K562 (cell line): ENCODE measurements at regions of chr4 and their contacts with region 1.

Region 1: GRCh38 chr4:6942238-6942800 is 32.7 kb downstream of the TBC1D14 start:
- DNase-seq: peak; percentile 56 to 78 (median 65)
- ATAC-seq: peak; percentile 91
- H3K4me3 ChIP-seq: 0 out of 2 replicates have a peak overlapping the region, but pooled peaks have one; percentile 5
- H3K27ac ChIP-seq: peak overlapping the region; percentile 73
- H3K4me1 ChIP-seq: peaks cover 36 to 54% of the 10 kb centered on the region in 2 experiments
- H3K27me3 ChIP-seq: no peaks in the 10 kb centered on the region
- CTCF ChIP-seq: no peak
- EP300 ChIP-seq: peak; percentile 74
- POLR2A ChIP-seq: no peak
- RAD21 ChIP-seq: 0 out of 4 replicates have a peak, but pooled peaks of 1 of the 2 experiments have one; percentile 3

Region 2: GRCh38 chr4:6917461-6918271 is 24.7 kb before region 1 on chr4:
- CTCF ChIA-PET with region 1: no interaction called
- POLR2A ChIA-PET with region 1: interaction called, 3 read pairs
- in situ Hi-C with region 1: no loop called
- intact Hi-C with region 1: loop called (anchors 2 kb)
- DNase-seq: peak; percentile 63 to 92 (median 70)
- ATAC-seq: peak; percentile 81
- H3K4me3 ChIP-seq: peak overlapping the region; percentile 15; the same call in 1 of the 2 replicates
- H3K27ac ChIP-seq: peak overlapping the region; percentile 97
- H3K4me1 ChIP-seq: peaks cover 58 to 60% of the 10 kb centered on the region in 2 experiments
- H3K27me3 ChIP-seq: no peaks in the 10 kb centered on the region; a peak in 1 of 5 replicates
- CTCF ChIP-seq: peak; percentile 64 to 82 (median 69)
- EP300 ChIP-seq: 0 out of 2 replicates have a peak, but pooled peaks have one; percentile 58
- POLR2A ChIP-seq: no peak
- RAD21 ChIP-seq: no peak; a peak in 1 of 4 replicates

Region 3: DNA sequence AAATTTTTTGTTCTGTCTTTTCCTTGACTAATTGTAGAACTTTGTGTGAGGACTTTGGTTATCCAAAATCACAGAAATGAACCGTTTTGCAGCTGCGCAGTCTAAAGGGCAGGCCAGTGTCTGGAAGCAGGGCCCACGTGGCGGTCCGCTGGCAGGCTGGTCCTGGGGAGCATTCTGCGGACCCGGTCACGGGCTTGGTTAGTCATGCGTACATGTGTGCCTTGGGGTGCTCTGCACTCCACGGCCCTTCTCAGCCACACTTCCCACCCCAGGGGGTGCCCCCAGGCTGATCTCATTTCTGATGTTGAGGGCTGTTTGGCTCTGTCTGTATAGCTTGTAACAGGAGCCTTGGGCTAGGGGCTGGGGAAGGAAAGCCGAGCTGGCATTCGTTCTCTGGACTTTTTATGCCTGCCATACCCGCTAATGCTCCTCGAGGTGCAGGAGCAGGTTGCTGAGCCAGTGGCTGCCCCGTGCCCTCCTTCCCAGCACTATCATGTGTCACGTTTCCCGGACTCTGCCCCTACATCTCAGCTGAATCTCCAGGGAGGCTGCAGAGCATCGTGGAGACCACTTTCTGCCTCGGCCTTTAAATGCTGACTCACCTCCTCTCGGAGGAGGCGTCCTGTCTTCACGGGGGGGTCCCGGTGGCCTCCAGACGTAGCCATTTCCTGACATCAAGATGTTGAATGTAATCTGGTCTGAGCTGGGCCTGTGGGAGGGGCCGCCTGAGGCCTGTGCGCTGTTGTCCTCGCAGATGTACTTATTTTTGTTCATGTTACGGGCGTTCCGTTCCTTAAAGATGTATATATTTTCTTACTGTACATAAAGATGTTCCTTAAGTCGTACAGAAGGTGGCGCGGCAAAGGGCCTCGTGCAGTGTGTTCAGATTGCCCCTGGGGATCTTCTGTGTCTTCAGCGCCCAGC is 89.5 kb after region 1 on chr4:
- CTCF ChIA-PET with region 1: no interaction called
- POLR2A ChIA-PET with region 1: no interaction called
- in situ Hi-C with region 1: no loop called
- intact Hi-C with region 1: no loop called
- DNase-seq: peak; percentile 87 to 93 (median 90)
- ATAC-seq: peak; percentile 94
- H3K4me3 ChIP-seq: no peak overlapping the region
- H3K27ac ChIP-seq: peak overlapping the region; percentile 80
- H3K4me1 ChIP-seq: peaks cover 14 to 35% of the 10 kb centered on the region in 2 experiments
- H3K27me3 ChIP-seq: no peaks in the 10 kb centered on the region
- CTCF ChIP-seq: peak; percentile 42 to 55 (median 50)
- EP300 ChIP-seq: peak; percentile 73; the same call in 1 of the 2 replicates
- POLR2A ChIP-seq: 0 out of 2 replicates have a peak, but pooled peaks have one; percentile 39
- RAD21 ChIP-seq: peak; percentile 7 to 32; a peak in 2 of 4 replicates

Region 4: GRCh38 chr4:7186061-7186461 is 243.7 kb after region 1 on chr4:
- CTCF ChIA-PET with region 1: no interaction called
- POLR2A ChIA-PET with region 1: no interaction called
- in situ Hi-C with region 1: no loop called
- intact Hi-C with region 1: no loop called
- DNase-seq: peak; percentile 17 to 60 (median 50)
- ATAC-seq: peak; percentile 81
- H3K4me3 ChIP-seq: no peak overlapping the region
- H3K27ac ChIP-seq: no peak overlapping the region
- H3K4me1 ChIP-seq: no peaks in the 10 kb centered on the region
- H3K27me3 ChIP-seq: peaks cover 21 to 43% of the 10 kb centered on the region in 2 experiments; a peak in 4 of 5 replicates
- CTCF ChIP-seq: peak; percentile 27 to 54 (median 46); a peak in 4 of 6 replicates
- EP300 ChIP-seq: no peak
- POLR2A ChIP-seq: no peak
- RAD21 ChIP-seq: peak in 1 of 2 experiments; percentile 43; a peak in 2 of 4 replicates

Region 5: DNA sequence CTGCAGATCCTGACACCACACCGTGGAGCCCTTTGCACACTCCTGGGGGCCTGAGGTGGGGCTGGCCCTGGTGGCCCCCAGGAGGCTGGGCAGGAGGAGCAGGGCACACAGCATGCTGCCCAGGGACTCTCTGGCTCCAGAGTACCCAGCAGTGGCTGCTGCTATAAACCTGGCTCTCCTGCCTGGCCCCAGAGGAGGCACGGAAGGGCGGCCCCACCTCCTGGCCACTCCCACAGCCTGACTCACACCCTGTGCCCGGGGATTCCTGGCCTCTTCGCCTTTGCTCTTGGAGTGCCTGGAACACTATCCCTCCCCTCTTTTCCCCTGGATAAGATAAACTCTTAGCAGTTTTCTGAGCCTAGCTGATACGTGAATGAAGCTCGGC is 492.4 kb after region 1 on chr4 and contains the start of gene PSAPL1:
- CTCF ChIA-PET with region 1: no interaction called
- POLR2A ChIA-PET with region 1: no interaction called
- in situ Hi-C with region 1: no loop called
- intact Hi-C with region 1: no loop called
- DNase-seq: peak; percentile 12 to 51 (median 37)
- ATAC-seq: peak; percentile 69
- H3K4me3 ChIP-seq: no peak within 1 kb of the TSS
- H3K27ac ChIP-seq: no peak within 1 kb of the TSS
- H3K4me1 ChIP-seq: peaks cover 0 to 7% of the 10 kb centered on the region in 2 experiments; a peak in 2 of 5 replicates
- H3K27me3 ChIP-seq: peaks cover 0 to 47% of the 10 kb centered on the region in 2 experiments; a peak in 3 of 5 replicates
- CTCF ChIP-seq: no peak
- EP300 ChIP-seq: no peak
- POLR2A ChIP-seq: no peak
- RAD21 ChIP-seq: no peak
- polyA plus RNA-seq, gene PSAPL1: not detected